Heart left ventricle (tissue), 16 donors: ENCODE measurements at regions of chr2 and their contacts with region 1.

Region 1: DNA sequence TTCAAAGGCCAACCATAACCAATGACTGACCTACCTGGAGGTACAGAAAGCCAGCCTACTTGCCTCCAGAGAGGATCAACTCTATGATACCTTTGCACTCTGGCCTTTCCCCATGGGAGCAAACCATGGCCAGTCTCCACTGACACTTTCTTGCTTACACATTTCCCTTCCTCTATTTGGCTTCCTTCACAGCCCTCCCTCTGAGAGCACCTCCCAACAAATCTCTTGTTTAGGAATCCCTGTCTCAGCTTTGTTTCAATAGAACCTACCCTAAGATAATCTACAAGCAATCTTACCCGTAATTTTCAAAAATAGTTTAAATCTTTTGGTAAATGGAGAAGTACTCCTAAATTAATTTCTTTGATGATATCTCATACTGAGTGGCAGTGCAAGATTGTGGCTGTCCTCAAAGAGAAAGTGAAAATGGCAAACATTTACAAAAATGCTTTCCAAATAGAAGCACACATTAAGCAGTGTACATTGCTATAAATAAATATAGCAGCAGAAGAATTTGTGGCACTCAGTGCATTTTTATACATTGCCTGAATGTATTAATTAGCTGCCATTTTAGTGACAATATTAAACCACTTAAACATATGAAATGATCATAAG is 140.6 kb downstream of the CCDC148 start:
- DNase-seq: no peak
- ATAC-seq: no peak
- H3K4me3 ChIP-seq: no peak overlapping the region
- H3K27ac ChIP-seq: peak overlapping the region in 1 of 12 donors; percentile 3
- H3K4me1 ChIP-seq: peaks cover 0 to 8% (median 0%) of the 10 kb centered on the region in 12 donors
- H3K27me3 ChIP-seq: no peaks in the 10 kb centered on the region
- CTCF ChIP-seq: no peak
- POLR2A ChIP-seq: no peak

Region 2: DNA sequence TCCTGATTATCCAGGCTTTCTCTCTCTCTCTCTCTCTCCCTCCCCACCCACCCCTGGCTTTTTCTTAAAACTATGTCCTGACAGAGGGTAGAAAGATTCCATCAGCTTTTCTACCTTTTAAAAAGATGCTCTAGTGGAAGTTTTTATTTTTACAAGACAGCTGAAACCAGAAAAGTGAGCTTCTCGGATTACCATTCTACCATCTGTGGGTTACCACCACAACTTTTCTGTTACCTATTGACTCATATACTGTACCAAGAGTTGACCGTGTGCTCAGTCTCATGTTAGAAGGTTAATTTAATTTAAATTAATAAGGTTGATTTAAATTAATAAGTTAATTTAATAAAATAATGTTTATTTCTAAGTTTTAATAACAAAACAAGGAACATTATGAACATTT is 76.6 kb before region 1 on chr2:
- intact Hi-C with region 1: no loop called
- DNase-seq: no peak
- ATAC-seq: no peak
- H3K4me3 ChIP-seq: no peak overlapping the region
- H3K27ac ChIP-seq: no peak overlapping the region
- H3K4me1 ChIP-seq: no peaks in the 10 kb centered on the region
- H3K27me3 ChIP-seq: no peaks in the 10 kb centered on the region
- CTCF ChIP-seq: no peak
- POLR2A ChIP-seq: no peak

Region 3: GRCh38 chr2:158270536-158270935 is 45.4 kb before region 1 on chr2:
- intact Hi-C with region 1: loop called in 1 of 10 experiments (anchors 2 kb)
- DNase-seq: no peak
- ATAC-seq: no peak
- H3K4me3 ChIP-seq: no peak overlapping the region
- H3K27ac ChIP-seq: no peak overlapping the region
- H3K4me1 ChIP-seq: no peaks in the 10 kb centered on the region
- H3K27me3 ChIP-seq: peaks cover 0 to 3% (median 0%) of the 10 kb centered on the region in 9 donors
- CTCF ChIP-seq: no peak
- POLR2A ChIP-seq: no peak

Region 4: DNA sequence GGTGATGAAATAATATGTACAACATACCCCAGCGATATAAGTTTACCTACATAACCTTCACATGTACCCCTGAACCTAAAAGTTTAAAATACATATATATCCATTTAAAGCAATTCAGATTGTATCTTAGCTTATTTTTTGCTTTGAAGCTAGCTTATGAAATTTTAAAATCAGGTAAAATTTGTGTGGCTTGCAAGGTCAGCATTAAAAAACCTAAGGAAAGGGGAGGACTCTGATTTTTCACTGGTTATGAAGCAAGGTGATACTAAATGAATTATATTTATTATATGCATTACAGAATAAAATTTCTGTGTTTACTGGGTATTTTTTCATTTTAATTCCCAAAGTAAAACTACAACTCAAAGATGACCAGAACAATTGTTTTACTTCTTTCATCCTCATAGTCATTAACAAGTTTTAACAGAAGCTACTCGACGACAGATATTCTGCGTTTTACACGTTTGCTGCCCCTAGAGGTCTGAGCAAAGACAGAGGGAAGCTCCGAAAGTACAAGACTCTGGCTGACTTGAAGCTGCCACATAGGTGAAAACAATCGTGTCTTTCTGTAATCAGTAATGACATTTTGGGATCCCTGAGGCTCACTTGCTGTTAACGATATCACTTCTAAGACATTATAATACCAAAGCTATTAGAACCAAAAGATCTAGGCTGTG is 157.9 kb after region 1 on chr2:
- intact Hi-C with region 1: no loop called
- DNase-seq: no peak
- ATAC-seq: no peak
- H3K4me3 ChIP-seq: no peak overlapping the region
- H3K27ac ChIP-seq: no peak overlapping the region
- H3K4me1 ChIP-seq: peaks cover 3 to 35% (median 21%) of the 10 kb centered on the region in 12 donors
- H3K27me3 ChIP-seq: no peaks in the 10 kb centered on the region
- CTCF ChIP-seq: no peak
- POLR2A ChIP-seq: no peak